Heart right ventricle (tissue), 16 donors: ENCODE measurements at regions of chr15 and their contacts with region 1.

Region 1: GRCh38 chr15:40525855-40526254 is 39.0 kb downstream of the CCDC32 start:
- DNase-seq: no peak
- ATAC-seq: no peak
- H3K4me3 ChIP-seq: no peak overlapping the region
- H3K27ac ChIP-seq: no peak overlapping the region
- H3K4me1 ChIP-seq: no peaks in the 10 kb centered on the region
- H3K27me3 ChIP-seq: no peaks in the 10 kb centered on the region
- CTCF ChIP-seq: no peak

Region 2: DNA sequence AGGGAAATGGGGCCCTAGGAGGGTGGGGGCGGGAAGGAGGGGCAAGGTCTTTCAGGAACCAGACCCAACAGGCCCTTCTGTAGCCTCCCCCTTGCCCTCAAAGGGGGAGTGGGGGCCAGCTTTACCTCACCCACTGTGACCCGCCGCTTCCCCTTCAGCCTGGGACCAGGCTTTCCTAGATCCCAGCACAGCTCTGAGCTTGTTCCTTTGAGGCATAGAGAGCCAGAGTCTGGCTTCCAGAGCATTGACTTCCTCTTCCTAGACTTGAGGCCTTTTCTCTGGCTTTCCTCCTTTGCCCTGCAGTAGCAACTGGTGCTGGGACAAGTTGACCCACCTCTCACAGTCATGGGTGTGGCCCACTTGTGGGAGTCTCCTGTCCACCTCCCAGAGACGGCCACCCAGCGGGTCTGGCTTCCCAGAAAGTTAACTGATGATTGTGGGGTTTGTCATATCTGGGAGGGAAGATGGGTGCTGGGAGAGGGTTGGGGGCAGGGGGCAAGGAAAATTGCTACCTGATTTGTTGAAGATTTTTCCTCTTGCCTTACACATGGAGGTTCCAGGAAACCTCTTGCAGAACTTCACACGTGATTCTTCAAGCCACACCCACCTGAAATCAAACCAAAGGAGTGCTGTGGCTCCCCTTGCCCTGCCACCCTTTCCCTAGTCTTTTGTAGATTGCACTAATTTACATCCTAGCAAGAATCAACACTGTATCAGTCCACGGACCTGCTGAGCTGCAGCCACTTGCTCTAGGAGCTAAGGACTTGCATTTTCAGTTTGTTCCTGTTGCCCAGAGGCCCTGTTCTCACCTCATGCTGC is 59.2 kb before region 1 on chr15:
- intact Hi-C with region 1: no loop called
- DNase-seq: no peak
- ATAC-seq: no peak
- H3K4me3 ChIP-seq: no peak overlapping the region
- H3K27ac ChIP-seq: no peak overlapping the region
- H3K4me1 ChIP-seq: peaks cover under 1 to 16% (median 11%) of the 10 kb centered on the region in 9 donors
- H3K27me3 ChIP-seq: no peaks in the 10 kb centered on the region
- CTCF ChIP-seq: no peak

Region 3: GRCh38 chr15:40578892-40579291 is 53.0 kb after region 1 on chr15:
- intact Hi-C with region 1: loop called in 1 of 10 experiments (anchors 10 kb)
- DNase-seq: no peak
- ATAC-seq: no peak
- H3K4me3 ChIP-seq: no peak overlapping the region
- H3K27ac ChIP-seq: no peak overlapping the region
- H3K4me1 ChIP-seq: no peaks in the 10 kb centered on the region
- H3K27me3 ChIP-seq: no peaks in the 10 kb centered on the region
- CTCF ChIP-seq: no peak